Activated B cell treated with CpG ODN at 0.5 μM for 24 hours (primary cell): ENCODE measurements at regions of chr18 and their contacts with region 1.

Region 1: DNA sequence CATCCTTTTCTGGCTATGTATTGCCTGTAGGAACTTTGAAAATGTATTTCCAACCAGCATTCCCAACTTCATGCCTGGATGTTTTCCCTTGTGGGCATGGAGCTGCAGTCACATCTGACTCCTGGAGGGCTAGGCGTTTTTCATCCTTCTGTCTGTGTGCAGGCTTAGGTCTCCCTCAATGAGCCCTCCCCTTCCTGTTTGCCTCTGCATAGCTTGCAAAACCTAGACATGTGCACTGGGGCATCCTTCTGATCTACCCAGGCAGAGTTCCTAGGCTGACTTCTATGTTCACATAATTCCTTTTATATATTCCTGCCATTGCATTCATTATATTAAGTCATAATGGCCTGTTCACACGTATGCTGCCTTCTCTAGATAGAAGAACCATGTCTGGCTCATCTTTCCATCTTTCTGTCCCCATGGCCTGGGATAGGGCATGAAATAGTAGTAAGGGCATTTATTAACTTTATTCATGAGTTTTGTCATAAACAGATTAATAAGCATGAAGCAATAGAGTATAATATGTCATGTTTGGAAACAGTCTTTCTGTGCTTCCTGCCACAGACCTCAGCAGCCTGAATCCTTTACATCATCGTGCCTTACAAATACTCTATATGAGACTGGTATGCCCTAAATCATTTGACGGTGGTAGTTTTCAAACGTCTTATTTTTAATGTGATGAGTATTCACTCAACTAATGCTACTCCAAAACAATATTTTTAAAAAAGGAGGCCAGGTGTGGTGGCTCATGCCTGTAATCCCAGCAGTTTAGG is 195.6 kb downstream of the TGIF1 start:
- DNase-seq: no peak
- ATAC-seq: no peak
- H3K4me3 Mint-ChIP-seq: no peak overlapping the region
- H3K27ac Mint-ChIP-seq: no peak overlapping the region
- H3K4me1 Mint-ChIP-seq: no peaks in the 10 kb centered on the region
- H3K27me3 Mint-ChIP-seq: peaks cover 4% of the 10 kb centered on the region
- CTCF ChIP-seq: no peak

Region 2: GRCh38 chr18:3660739-3661515 is 15.4 kb after region 1 on chr18:
- CTCF ChIA-PET with region 1: interaction called, 8 read pairs
- POLR2A ChIA-PET with region 1: interaction called, 10 read pairs
- intact Hi-C with region 1: no loop called
- DNase-seq: no peak
- ATAC-seq: peak; percentile 71
- H3K4me3 Mint-ChIP-seq: peak overlapping the region; percentile 56
- H3K27ac Mint-ChIP-seq: peak overlapping the region; percentile 69
- H3K4me1 Mint-ChIP-seq: peaks cover 28% of the 10 kb centered on the region
- H3K27me3 Mint-ChIP-seq: no peaks in the 10 kb centered on the region
- CTCF ChIP-seq: no peak